ENCODE measurements at regions of chr6 and their contacts with region 1.

Region 1: DNA sequence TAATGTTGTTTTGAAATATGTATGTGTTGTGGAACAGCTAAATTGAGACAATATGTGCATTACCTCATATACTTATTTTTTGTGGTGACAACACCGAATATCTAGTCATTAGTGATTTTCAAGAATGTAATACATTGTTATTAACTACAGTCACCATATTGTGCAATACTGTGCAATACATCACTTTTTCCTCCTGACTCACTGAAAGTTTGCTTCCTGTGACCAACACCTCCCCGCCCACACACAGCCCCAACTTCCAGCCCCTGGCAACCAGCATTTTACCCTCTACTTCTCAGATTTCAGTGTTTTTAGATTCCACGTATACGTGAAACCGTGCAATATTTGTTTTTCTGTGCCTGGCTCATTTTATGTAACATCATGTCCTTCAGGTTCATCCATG is 627.9 kb downstream of the PRKN start:
- DNase-seq: no peak
- H3K4me3 ChIP-seq: no peak overlapping the region
- H3K27ac ChIP-seq: no peak overlapping the region
- H3K4me1 ChIP-seq: no peaks in the 10 kb centered on the region
- H3K27me3 ChIP-seq: no peaks in the 10 kb centered on the region
- CTCF ChIP-seq: no peak
- POLR2A ChIP-seq: no peak

Region 2: GRCh38 chr6:160156842-160157241 is 1942.8 kb before region 1 on chr6:
- intact Hi-C with region 1: loop called (anchors 10 kb)
- DNase-seq: no peak
- H3K4me3 ChIP-seq: no peak overlapping the region
- H3K27ac ChIP-seq: no peak overlapping the region
- H3K4me1 ChIP-seq: no peaks in the 10 kb centered on the region
- H3K27me3 ChIP-seq: no peaks in the 10 kb centered on the region
- CTCF ChIP-seq: no peak
- POLR2A ChIP-seq: no peak

Region 3: GRCh38 chr6:161922631-161923119 is 177.0 kb before region 1 on chr6:
- intact Hi-C with region 1: no loop called
- DNase-seq: peak in 1 of 2 donors; percentile 21
- H3K4me3 ChIP-seq: no peak overlapping the region
- H3K27ac ChIP-seq: no peak overlapping the region
- H3K4me1 ChIP-seq: no peaks in the 10 kb centered on the region
- H3K27me3 ChIP-seq: no peaks in the 10 kb centered on the region
- CTCF ChIP-seq: no peak
- POLR2A ChIP-seq: no peak

Region 4: GRCh38 chr6:162050579-162050978 is 49.1 kb before region 1 on chr6:
- intact Hi-C with region 1: no loop called
- DNase-seq: no peak
- H3K4me3 ChIP-seq: no peak overlapping the region
- H3K27ac ChIP-seq: no peak overlapping the region
- H3K4me1 ChIP-seq: no peaks in the 10 kb centered on the region
- H3K27me3 ChIP-seq: no peaks in the 10 kb centered on the region
- CTCF ChIP-seq: no peak
- POLR2A ChIP-seq: no peak

Region 5: DNA sequence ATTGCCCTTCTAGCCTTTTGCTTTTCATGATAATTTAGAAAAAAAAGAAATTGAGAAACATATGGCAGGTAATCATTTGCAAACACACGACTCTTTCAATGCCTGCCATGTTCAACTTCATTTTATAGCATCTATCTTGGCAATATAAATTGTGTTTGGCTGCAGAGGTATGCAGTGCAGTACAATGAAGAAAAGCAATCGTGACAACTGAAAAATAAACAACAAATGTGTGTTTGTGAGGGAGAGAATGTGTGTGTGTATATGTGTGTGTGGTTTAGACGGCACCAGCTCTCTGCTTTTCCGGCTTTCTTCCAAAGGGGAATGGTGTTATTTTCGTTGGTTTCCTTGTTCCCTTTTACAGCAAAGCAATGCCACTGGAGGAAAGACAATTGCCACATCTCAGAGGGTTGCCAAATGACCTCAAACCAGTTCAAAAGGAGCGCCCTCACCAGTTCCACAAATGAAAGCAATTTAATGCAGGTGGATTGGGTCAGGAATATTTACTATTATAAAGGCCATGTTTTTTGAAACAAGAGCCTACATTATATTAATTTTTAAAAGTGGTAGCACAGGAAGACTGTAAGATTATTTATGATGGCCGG is 40.7 kb after region 1 on chr6:
- intact Hi-C with region 1: no loop called
- DNase-seq: no peak
- H3K4me3 ChIP-seq: no peak overlapping the region
- H3K27ac ChIP-seq: no peak overlapping the region
- H3K4me1 ChIP-seq: no peaks in the 10 kb centered on the region
- H3K27me3 ChIP-seq: no peaks in the 10 kb centered on the region
- CTCF ChIP-seq: no peak
- POLR2A ChIP-seq: no peak